ENCODE measurements at regions of chr11 and their contacts with region 1.

Region 1: GRCh38 chr11:10933455-10934292 is 75.8 kb upstream of the ZBED5 start:
- H3K4me3 ChIP-seq: peak overlapping the region; percentile 43
- H3K27ac ChIP-seq: no peak overlapping the region; the same call in 1 of the 2 replicates
- H3K4me1 ChIP-seq: no peaks in the 10 kb centered on the region
- CTCF ChIP-seq: peak; percentile 79

Region 2: GRCh38 chr11:10526974-10527918 is 406.4 kb before region 1 on chr11:
- CTCF ChIA-PET with region 1: no interaction called
- POLR2A ChIA-PET with region 1: no interaction called
- H3K4me3 ChIP-seq: no peak overlapping the region
- H3K27ac ChIP-seq: no peak overlapping the region
- H3K4me1 ChIP-seq: no peaks in the 10 kb centered on the region
- CTCF ChIP-seq: no peak

Region 3: GRCh38 chr11:10716127-10716526 is 217.5 kb before region 1 on chr11:
- CTCF ChIA-PET with region 1: no interaction called
- POLR2A ChIA-PET with region 1: no interaction called
- H3K4me3 ChIP-seq: no peak overlapping the region
- H3K27ac ChIP-seq: no peak overlapping the region
- H3K4me1 ChIP-seq: no peaks in the 10 kb centered on the region
- CTCF ChIP-seq: no peak

Region 4: GRCh38 chr11:10792398-10792975 is 141.2 kb before region 1 on chr11:
- CTCF ChIA-PET with region 1: interaction called, 24 read pairs
- POLR2A ChIA-PET with region 1: interaction called, 4 read pairs
- H3K4me3 ChIP-seq: no peak overlapping the region
- H3K27ac ChIP-seq: no peak overlapping the region
- H3K4me1 ChIP-seq: no peaks in the 10 kb centered on the region
- CTCF ChIP-seq: peak; percentile 90

Region 5: DNA sequence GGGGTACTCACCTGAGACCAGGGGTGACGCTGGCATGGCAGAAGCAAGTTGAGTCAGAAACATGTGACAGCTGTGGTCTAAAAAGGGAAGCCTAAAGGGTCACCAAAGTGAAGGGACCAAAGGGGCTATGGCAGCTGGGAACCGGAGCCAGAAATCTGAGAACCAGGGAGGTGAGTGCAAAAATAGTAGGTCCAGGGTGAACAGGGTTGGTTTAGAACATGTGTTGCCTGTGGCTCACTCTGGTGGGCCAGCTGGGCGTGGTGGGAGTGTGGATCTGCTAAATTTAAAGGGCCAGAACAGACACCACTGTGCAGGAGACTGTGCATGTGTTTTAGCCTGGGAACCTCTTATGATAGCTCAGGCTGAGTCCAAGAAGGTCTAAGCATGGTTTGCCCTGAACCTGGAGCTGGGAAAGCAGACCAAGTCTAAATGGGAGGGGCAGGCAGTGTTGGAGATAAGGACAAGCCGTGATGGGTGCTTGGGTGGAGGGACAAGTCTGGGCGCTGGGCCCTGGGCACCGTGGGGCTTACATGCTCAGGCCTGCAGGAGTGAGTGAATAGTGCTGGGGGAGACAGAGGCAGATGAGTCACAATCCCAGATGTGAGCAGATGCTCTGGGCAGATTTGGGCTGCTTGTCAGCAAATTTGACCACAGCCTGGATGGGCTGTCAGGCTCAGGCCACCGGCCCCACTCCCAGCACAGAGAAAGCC is 34.4 kb before region 1 on chr11:
- CTCF ChIA-PET with region 1: interaction called, 3 read pairs
- POLR2A ChIA-PET with region 1: interaction called, 11 read pairs
- H3K4me3 ChIP-seq: no peak overlapping the region
- H3K27ac ChIP-seq: peak overlapping the region; percentile 78
- H3K4me1 ChIP-seq: 0 out of 2 replicates have a peak, but pooled peaks cover 5% of the 10 kb centered on the region
- CTCF ChIP-seq: no peak

Region 6: DNA sequence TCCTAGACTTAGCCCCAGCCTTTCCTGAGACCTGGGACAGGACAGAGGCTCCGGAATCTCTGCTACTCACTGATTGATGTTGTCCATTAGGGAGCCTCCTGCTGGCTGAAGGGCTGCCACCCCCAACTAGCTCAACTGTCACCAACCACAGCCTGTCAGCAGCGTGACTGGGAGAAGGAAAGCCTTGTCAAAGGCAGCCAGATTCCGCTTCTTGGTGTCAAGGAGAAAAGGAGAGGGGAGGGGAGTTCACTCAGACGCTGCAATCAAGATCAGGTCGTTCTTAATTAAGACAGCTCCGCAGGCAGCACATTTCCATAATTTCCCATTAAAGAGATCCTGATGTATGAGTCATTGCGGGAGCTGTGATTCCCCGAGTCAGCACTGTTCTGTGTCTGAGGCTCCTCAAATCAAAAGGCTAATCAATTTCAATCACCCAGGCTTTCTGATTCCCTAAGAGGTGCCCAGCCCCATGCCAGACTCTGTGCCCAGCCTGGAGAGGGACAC is 77.0 kb after region 1 on chr11:
- CTCF ChIA-PET with region 1: interaction called, 25 read pairs
- POLR2A ChIA-PET with region 1: no interaction called
- H3K4me3 ChIP-seq: no peak overlapping the region
- H3K27ac ChIP-seq: no peak overlapping the region
- H3K4me1 ChIP-seq: no peaks in the 10 kb centered on the region
- CTCF ChIP-seq: no peak

Region 7: DNA sequence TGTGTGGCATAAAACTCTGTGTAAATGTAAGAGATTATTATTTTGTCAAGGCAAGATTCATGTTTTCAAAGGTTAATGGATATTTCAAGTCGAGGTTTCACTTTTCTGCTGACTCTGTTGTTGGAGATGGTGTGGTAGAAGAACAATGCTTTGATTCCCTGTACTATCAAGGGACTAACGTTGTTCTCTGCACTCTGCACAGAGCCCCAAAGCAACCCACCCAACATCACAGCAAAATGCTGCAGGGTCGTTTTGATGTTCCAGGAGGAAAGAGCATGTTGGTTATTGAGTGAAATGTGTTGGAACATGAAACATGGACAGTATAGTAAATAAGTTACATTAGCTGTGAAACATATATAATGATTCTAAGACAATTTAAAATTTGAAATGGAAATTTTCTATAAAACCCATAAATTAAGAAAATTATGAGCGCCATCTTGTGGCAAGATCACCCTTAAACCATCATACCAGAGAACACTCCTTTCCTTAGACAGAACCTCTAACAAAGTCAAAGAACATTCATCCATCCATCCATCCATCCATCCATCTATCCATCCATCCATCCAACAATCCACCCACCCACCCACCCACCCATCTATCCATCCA is 88.6 kb after region 1 on chr11:
- CTCF ChIA-PET with region 1: interaction called, 150 read pairs
- POLR2A ChIA-PET with region 1: interaction called, 7 read pairs
- H3K4me3 ChIP-seq: no peak overlapping the region
- H3K27ac ChIP-seq: no peak overlapping the region
- H3K4me1 ChIP-seq: no peaks in the 10 kb centered on the region
- CTCF ChIP-seq: no peak

Region 8: DNA sequence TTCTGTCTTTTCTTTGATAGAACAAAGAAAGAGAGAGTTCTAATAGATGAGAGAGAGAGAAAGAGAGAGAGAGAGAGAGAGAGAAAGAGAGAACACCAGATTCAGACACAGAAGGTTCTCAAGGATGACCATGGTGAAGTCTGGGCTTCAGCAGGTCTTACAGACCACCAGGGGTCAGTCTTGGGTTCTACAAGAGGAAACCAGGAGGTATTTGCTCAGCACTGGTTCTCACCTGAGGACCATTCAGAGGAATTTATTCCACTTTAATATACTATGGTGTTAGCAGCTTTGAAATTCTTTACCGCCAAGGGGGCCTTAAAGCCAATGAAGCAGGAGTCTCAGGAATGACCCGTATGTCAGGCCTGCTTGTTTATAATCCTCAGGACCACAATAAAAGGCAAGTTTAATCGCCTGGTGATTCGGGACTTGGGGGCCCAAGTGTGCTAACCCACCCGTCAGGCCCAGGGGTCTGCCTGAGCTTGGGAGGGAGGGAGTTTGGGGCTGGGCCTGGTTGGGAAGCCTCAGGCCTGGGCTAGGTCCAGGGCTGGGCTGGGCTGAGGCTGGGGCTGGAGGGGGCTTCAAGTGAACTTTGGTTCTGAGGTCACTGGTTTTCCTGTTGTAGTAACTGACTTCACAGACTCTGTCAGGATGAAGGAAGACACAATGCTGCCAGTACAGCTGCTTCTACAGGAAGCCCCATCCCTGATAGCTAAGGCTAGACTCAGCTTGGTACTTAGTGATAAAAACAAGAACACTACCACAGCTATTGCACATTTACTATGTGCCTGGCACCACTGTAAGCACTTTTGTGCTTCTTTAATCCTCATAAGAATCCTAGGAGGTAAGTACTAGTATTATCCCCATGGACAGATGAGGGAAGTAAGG is 103.4 kb after region 1 on chr11:
- CTCF ChIA-PET with region 1: interaction called, 20 read pairs
- POLR2A ChIA-PET with region 1: no interaction called
- H3K4me3 ChIP-seq: no peak overlapping the region
- H3K27ac ChIP-seq: no peak overlapping the region
- H3K4me1 ChIP-seq: no peaks in the 10 kb centered on the region
- CTCF ChIP-seq: no peak

Measured in HEK293 (cell line).